OCI-LY7 (cell line): ENCODE measurements at regions of chr19 and their contacts with region 1.

Region 1: GRCh38 chr19:11242864-11243797 is 3.7 kb downstream of the ANGPTL8 start:
- DNase-seq: peak; percentile 81
- H3K4me3 ChIP-seq: no peak overlapping the region
- H3K27ac ChIP-seq: no peak overlapping the region
- H3K4me1 ChIP-seq: no peaks in the 10 kb centered on the region
- CTCF ChIP-seq: peak; percentile 89

Region 2: GRCh38 chr19:11264452-11265176 is 21.5 kb after region 1 on chr19:
- CTCF ChIA-PET with region 1: no interaction called
- POLR2A ChIA-PET with region 1: no interaction called
- intact Hi-C with region 1: loop called (anchors 2 kb)
- DNase-seq: peak; percentile 81
- H3K4me3 ChIP-seq: no peak overlapping the region
- H3K27ac ChIP-seq: peak overlapping the region; percentile 28
- H3K4me1 ChIP-seq: peaks cover 36% of the 10 kb centered on the region
- CTCF ChIP-seq: no peak

Region 3: DNA sequence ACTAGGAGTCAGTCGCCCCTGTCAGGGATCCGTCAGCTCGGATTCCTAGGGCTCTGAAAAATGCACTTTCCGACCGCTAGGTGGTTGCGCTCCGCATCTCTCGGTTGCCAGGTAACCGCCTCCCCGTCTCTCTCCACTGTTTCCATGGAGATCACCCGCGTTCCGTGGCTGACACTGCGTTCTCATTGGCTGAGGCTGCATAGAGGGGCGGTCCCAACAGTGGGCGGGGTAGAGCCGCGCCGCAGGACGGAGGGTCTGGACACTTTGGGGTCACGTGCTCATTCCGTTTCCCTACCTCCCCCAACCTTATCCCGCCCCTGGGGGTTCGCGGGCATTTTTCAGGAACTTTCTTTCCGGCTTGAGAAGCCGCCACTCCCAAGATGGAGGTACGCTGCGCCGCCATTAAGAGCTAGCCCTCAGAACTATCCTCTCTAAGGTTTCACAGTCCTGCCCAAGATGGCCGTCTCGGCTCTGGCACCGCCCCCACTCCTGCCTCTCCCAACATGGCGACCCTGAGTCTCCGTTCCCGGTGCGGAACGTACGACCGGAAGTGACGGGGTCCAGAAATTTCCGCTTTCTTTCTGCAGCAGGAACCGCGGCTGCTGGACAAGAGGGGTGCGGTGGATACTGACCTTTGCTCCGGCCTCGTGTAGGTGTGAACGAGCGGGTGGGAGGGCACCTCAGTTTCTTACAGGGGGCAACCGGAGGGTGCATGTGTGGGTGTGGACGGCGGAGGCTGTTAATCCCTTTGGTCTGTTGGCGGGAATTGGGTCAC is 192.1 kb after region 1 on chr19 and contains the starts of genes ODAD3 and PRKCSH:
- CTCF ChIA-PET with region 1: no interaction called
- POLR2A ChIA-PET with region 1: no interaction called
- intact Hi-C with region 1: no loop called
- DNase-seq: peak; percentile 99
- H3K4me3 ChIP-seq: peak within 1 kb of the TSS; percentile 92
- H3K27ac ChIP-seq: peak within 1 kb of the TSS; percentile 33
- H3K4me1 ChIP-seq: peaks cover 24% of the 10 kb centered on the region
- CTCF ChIP-seq: peak; percentile 82
- total RNA-seq, gene ODAD3: 0.28 and 0.57 TPM in 2 replicates
- total RNA-seq, gene PRKCSH: 61.8 and 95.6 TPM in 2 replicates